ENCODE measurements at regions of chr7 and their contacts with region 1.

Region 1: GRCh38 chr7:100611974-100612729 is at the start of gene MOSPD3:
- DNase-seq: peak; percentile 99
- ATAC-seq: peak; percentile 97 to 99 (median 98)
- H3K4me3 ChIP-seq: peak within 1 kb of the TSS; percentile 57 to 97 (median 83)
- H3K27ac ChIP-seq: peak within 1 kb of the TSS; percentile 65 to 97 (median 91)
- H3K4me1 ChIP-seq: peaks cover 0 to 20% (median 10%) of the 10 kb centered on the region in 9 donors
- H3K27me3 ChIP-seq: no peaks in the 10 kb centered on the region
- CTCF ChIP-seq: no peak
- total RNA-seq, gene MOSPD3: 8.0 to 12.5 (median 9.9) TPM

Region 2: GRCh38 chr7:100586266-100587025 is 25.7 kb before region 1 on chr7 and contains the start of gene FBXO24:
- intact Hi-C with region 1: loop called in 1 of 10 experiments (anchors 1 kb)
- DNase-seq: peak; percentile 100
- ATAC-seq: peak; percentile 91 to 97 (median 94)
- H3K4me3 ChIP-seq: peak within 1 kb of the TSS; percentile 80 to 100 (median 96)
- H3K27ac ChIP-seq: peak within 1 kb of the TSS; percentile 90 to 98 (median 94)
- H3K4me1 ChIP-seq: peaks cover 9 to 67% (median 52%) of the 10 kb centered on the region in 9 donors
- H3K27me3 ChIP-seq: peaks cover 0 to 14% (median 0%) of the 10 kb centered on the region in 7 donors
- CTCF ChIP-seq: peak in 1 of 9 donors; percentile 10
- total RNA-seq, gene FBXO24: 0.15 to 0.66 (median 0.40) TPM in 8 of 10 donors, not detected in the others

Region 3: DNA sequence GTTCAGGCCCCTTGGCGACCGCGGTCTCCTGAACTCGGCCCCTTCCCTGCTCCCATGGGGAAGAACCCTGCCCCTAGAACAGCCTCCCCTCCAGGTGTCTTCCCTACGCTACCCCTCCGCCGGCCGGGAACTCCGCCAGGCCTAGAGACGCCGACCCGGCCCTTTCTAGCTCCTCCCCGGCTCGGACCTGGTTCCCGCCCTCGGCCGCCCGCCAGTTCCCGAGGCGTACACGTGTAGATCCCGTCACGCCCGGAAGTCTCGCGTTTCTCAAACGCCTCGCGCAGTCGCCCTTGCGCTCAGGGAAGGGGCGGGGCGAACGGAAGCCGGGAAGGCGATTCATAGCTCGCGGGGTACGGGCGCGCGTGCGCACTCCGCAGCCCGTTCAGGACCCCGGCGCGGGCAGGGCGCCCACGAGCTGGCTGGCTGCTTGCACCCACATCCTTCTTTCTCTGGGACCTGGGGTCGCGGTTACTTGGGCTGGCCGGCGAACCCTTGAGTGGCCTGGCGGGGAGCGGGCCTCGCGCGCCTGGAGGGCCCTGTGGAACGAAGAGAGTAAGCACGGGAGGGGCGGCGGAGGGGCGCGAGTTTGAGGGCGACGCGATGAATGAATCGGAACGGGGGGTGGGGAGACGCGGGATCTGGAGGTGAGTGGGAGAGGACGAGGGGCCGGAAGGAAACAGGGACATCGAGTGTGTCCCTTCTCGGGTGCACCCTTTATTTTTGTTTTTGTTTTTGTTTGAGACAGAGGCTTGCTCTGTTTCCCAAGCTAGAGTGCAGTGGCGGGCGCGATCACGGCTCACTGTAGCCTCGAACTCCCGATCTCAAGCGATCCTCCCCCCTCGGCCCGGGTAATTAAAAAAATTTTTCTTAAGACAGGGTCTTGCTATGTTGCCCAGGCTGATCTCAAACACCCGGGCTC is 93.9 kb after region 1 on chr7 and contains the start of gene POP7:
- intact Hi-C with region 1: loop called in 1 of 10 experiments (anchors 1 kb)
- DNase-seq: peak; percentile 99
- ATAC-seq: peak; percentile 97 to 99 (median 98)
- H3K4me3 ChIP-seq: peak within 1 kb of the TSS; percentile 63 to 95 (median 77)
- H3K27ac ChIP-seq: peak within 1 kb of the TSS; percentile 84 to 99 (median 94)
- H3K4me1 ChIP-seq: peaks cover 4 to 24% (median 17%) of the 10 kb centered on the region in 9 donors
- H3K27me3 ChIP-seq: no peaks in the 10 kb centered on the region
- CTCF ChIP-seq: no peak
- total RNA-seq, gene POP7: 23.2 to 34.9 (median 25.3) TPM

Region 4: DNA sequence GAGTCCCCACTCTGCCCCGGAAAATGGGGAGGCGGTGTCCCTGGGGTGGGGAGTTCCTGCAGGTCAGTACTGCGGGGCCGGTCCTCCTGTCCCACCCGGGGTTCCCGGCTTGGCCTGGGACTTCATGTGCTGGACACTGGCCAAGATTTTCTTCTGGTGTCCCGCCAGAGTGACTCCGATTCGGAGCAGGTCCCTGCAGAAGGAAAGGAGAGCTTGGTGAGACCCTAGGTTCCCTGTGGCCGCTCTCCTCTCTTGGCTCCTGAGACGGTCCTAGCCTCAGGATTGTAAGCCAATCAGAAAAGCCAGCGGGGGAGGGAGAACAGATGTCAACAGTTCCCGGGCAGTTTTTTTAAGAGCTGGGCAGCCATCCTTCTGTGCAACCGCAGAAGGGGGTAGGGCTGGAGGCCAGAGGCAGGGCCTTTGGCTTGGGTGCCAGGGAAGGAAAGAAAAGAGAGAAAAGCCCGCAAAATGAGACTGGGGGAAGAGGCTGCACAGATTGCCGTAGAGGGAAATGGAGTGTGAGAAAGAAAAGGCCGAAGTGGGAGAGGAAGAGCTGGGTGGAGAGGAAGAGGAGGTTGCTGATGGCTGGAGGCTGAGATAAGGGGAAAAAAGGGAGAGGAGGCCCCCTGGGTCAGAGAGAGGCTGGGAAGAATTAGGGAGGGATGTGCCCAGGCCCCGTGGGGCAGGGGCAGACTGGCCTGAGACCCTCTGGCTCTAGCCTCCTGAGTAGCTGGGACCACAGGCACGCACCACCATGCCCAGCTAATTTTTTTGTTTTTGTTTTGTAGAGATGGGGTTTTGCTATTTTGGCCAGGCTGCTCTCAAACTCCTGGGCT is 191.5 kb after region 1 on chr7:
- intact Hi-C with region 1: no loop called
- DNase-seq: peak; percentile 54 to 85
- ATAC-seq: peak; percentile 73 to 89 (median 82)
- H3K4me3 ChIP-seq: peak overlapping the region in 6 of 10 donors; percentile 7 to 29 (median 22)
- H3K27ac ChIP-seq: peak overlapping the region; percentile 26 to 63 (median 52)
- H3K4me1 ChIP-seq: peaks cover 18 to 62% (median 28%) of the 10 kb centered on the region in 9 donors
- H3K27me3 ChIP-seq: peaks cover 0 to 15% (median 3%) of the 10 kb centered on the region in 7 donors
- CTCF ChIP-seq: no peak

Region 5: GRCh38 chr7:100874577-100875355 is 262.6 kb after region 1 on chr7 and contains the start of gene SRRT:
- intact Hi-C with region 1: loop called in 1 of 10 experiments (anchors 10 kb)
- DNase-seq: peak; percentile 99
- ATAC-seq: peak; percentile 94 to 99 (median 98)
- H3K4me3 ChIP-seq: peak within 1 kb of the TSS; percentile 77 to 97 (median 87)
- H3K27ac ChIP-seq: peak within 1 kb of the TSS; percentile 86 to 97 (median 95)
- H3K4me1 ChIP-seq: peaks cover 2 to 50% (median 40%) of the 10 kb centered on the region in 9 donors
- H3K27me3 ChIP-seq: no peaks in the 10 kb centered on the region
- CTCF ChIP-seq: peak; percentile 35 to 55 (median 48)
- total RNA-seq, gene SRRT: 38.4 to 69.5 (median 49.6) TPM

Measured in heart right ventricle (tissue), 16 donors.